Activated T-helper 1 cell treated with anti-CD3 and anti-CD28 coated beads, Interleukin-12 subunit alpha, Interleukin-12 subunit beta, Interleukin-2, Interleukin-4 antibody, amounts not matched to agents 30 ng/mL and 10 ng/mL and 1 ng/mL, durations not matched to agents 14 hours and 24 hours and 36 hours (primary cell): ENCODE measurements at regions of chr5 and their contacts with region 1.

Region 1: DNA sequence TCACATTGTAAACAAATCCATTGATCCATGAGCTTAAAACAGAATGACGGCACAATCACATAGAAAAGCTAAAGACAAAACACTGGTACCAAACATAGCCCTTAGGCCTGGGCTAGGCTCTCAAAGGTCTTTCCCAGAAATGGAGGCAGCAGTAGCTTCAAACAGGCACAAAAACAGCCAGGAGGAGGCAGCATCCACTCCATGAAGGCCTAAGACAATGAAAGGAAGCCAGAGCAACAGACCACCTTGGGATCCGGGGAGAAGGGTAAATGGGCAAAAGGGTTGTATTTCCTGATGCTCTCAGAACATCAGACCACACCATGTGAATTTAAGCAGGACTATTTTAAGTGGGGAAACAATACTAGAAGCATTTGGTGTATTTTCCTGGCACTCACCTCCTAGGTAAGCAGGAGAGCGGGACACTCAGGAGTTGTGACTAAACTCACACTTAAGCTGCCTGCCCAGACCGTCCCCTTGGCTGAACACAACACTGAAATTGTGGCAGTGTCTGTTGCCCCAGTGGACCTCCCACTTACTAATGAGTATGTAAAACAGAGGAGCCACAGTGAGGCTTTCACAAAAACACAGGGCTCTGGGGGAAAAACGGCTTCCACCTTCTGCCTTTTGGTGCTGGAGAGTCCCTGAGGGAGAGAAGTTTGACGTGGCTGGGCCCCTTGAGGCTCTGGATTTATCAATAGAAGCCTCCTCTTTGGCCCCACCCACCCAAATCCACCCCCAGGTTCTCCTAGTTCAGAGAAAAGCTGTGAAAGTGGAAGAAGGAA is 11.9 kb downstream of the GNPDA1 start:
- DNase-seq: no peak
- H3K4me3 Mint-ChIP-seq: no peak overlapping the region
- H3K27ac Mint-ChIP-seq: peak overlapping the region; percentile 70
- H3K4me1 Mint-ChIP-seq: peaks cover 33% of the 10 kb centered on the region
- H3K27me3 Mint-ChIP-seq: no peaks in the 10 kb centered on the region

Region 2: DNA sequence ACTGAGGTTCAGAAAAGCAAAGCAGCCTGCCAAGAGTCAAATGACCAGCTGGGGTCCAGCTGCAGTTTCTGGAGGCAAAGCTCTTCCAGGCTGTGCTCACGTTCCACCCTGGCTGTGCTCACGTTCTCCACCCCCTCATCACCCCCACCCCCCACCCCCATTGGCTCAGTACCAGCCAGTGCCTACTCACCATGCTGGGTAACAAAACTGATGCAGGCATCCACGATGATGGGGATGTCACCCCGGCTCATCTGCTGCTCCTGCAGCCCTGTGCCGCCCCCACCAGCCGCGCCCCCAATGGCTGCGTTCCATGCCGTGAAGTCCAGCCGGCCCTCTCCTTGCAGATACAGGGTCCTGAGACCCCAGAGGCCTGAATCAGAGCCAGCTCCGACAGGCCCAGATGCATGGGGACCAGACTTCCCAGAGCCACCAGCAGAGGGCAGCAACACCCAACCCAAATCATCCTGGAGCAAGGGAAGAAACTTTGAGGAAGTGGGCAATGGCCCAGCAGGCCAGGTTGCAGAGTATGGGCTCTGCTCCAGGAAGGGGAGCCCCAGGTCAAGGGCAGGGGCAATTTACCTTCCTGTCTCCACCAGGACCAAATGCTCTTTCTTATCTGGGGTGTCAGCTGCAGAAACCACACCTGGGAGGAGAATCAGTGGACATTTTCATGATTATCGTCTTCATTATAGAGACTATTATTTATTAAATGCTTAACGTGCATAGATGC is 336.0 kb before region 1 on chr5:
- intact Hi-C with region 1: no loop called
- DNase-seq: peak; percentile 59
- H3K4me3 Mint-ChIP-seq: no peak overlapping the region
- H3K27ac Mint-ChIP-seq: no peak overlapping the region
- H3K4me1 Mint-ChIP-seq: no peaks in the 10 kb centered on the region
- H3K27me3 Mint-ChIP-seq: peaks cover 2% of the 10 kb centered on the region

Region 3: GRCh38 chr5:142145106-142145900 is 144.4 kb after region 1 on chr5:
- intact Hi-C with region 1: loop called (anchors 2 kb)
- DNase-seq: peak; percentile 26
- H3K4me3 Mint-ChIP-seq: no peak overlapping the region
- H3K27ac Mint-ChIP-seq: no peak overlapping the region
- H3K4me1 Mint-ChIP-seq: peaks cover 6% of the 10 kb centered on the region
- H3K27me3 Mint-ChIP-seq: no peaks in the 10 kb centered on the region